ENCODE measurements at regions of chr4 and their contacts with region 1.

Region 1: GRCh38 chr4:136731025-136731424 is 801.3 kb downstream of the PCDH18 start:
- DNase-seq: peak; percentile 63
- H3K4me3 ChIP-seq: no peak overlapping the region
- H3K27ac ChIP-seq: no peak overlapping the region
- H3K4me1 ChIP-seq: no peaks in the 10 kb centered on the region
- H3K27me3 ChIP-seq: no peaks in the 10 kb centered on the region
- CTCF ChIP-seq: no peak
- POLR2A ChIP-seq: no peak

Region 2: DNA sequence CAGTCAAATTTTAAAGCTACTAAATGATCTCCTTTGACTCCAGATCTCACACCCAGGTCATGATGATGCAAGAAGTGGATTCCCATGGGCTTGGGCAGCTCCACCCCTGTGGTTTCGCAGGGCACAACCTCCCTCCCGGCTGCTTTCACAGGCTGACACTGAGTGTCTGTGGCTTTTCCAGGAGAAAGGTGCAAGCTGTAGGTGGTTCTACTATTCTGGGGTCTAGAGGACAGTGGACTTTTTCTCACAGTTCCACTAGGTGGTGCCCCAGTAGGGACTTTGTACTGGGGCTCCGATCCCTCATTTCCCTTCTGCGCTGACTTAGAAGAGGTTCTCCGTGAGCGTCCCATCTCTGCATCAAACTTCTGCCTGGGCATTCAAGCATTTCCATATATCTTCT is 43.9 kb before region 1 on chr4:
- CTCF ChIA-PET with region 1: no interaction called
- POLR2A ChIA-PET with region 1: no interaction called
- dilution Hi-C with region 1: no loop called
- intact Hi-C with region 1: no loop called
- DNase-seq: no peak
- H3K4me3 ChIP-seq: no peak overlapping the region
- H3K27ac ChIP-seq: no peak overlapping the region
- H3K4me1 ChIP-seq: peaks cover 2% of the 10 kb centered on the region
- H3K27me3 ChIP-seq: no peaks in the 10 kb centered on the region
- CTCF ChIP-seq: no peak
- POLR2A ChIP-seq: no peak

Region 3: DNA sequence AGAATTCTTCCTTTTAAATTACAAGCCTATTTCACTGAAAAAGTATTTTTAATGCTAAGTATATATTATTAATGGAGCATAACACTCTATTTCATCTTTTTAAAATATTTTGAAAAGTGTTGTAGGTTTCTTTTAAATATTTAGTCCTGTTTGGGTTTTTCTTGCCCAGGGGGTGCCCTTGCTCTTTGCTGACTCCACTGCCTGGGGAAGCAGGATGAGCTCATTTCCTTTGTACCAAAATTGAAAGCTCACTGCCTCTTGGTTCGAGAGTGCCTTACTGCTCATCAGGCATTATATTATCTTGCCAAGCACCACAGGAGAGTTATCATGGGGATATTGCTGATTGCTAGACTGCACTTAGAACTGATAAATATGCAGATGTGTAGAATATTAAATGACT is 17.9 kb before region 1 on chr4:
- CTCF ChIA-PET with region 1: interaction called, 10 read pairs
- POLR2A ChIA-PET with region 1: no interaction called
- dilution Hi-C with region 1: no loop called
- intact Hi-C with region 1: no loop called
- DNase-seq: peak; percentile 58
- H3K4me3 ChIP-seq: no peak overlapping the region
- H3K27ac ChIP-seq: no peak overlapping the region
- H3K4me1 ChIP-seq: no peaks in the 10 kb centered on the region
- H3K27me3 ChIP-seq: no peaks in the 10 kb centered on the region
- CTCF ChIP-seq: no peak
- POLR2A ChIP-seq: no peak